GM23248 (cell line): ENCODE measurements at regions of chr13 and their contacts with region 1.

Region 1: DNA sequence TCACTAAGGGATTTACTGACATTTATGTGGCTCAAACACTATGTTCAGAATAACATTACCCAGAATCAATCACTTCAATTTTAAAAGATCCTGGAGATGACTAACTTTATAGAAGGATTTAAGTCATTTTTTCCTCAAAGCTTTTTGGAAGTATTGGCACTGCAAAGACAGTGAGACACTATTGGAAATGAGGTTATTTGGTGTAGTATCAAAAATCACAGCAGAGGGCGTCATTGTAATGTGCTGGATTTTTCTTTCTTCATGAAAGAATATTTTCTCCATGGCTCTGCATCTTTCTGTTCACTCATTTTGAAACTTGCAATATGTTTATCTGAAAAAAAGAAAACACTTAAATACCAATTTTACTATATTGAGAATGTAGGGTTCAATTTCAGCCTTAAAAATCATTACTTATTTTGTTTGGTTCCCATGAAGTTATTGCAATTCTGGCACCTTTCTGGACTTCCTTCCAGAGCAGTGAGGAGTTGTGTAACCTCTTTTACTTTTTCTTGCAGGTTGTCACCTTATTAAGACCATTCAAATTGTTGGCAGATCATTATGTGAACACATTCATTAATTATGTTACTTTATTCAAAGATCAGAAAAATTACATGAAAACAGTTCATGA is 3.7 kb upstream of the CSNK1A1L start:
- DNase-seq: peak; percentile 69
- H3K4me3 ChIP-seq: no peak overlapping the region
- H3K27ac ChIP-seq: no peak overlapping the region
- H3K4me1 ChIP-seq: peaks cover 9% of the 10 kb centered on the region
- H3K27me3 ChIP-seq: no peaks in the 10 kb centered on the region

Region 2: DNA sequence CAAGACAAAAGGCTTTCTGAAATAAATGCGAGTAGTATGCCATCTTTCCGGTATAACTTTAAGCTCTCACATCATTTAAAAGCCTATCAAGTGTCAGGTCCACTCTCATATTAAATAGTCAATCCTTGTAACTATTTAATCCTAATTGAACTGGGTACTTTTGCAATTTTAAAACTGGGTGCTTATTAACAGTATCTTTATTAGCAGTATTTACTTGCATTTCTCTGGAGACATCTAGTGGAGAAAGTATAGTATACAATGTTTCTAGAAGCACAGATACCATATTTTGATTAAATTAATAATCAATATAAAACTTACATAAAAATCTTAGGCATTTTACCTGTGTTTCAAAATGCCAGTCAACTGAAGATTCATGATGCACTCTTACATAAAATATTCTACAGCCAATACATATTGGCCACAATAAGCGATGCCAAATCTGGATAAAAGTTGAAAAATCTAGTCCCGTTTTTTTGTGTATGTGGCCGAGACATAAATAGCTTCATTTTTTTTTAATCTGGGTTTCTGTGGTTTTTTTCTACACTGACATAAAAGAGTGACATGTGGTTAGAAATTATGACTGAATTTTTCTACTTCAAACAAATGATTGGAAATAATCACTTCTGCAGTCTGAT is 493.7 kb after region 1 on chr13:
- in situ Hi-C with region 1: loop called (anchors 5 kb)
- DNase-seq: peak; percentile 70
- H3K4me3 ChIP-seq: no peak overlapping the region
- H3K27ac ChIP-seq: no peak overlapping the region
- H3K4me1 ChIP-seq: peaks cover 8% of the 10 kb centered on the region; the same call in 1 of the 2 replicates
- H3K27me3 ChIP-seq: no peaks in the 10 kb centered on the region